A549 (cell line): ENCODE measurements at regions of chr14 and their contacts with region 1.

Region 1: DNA sequence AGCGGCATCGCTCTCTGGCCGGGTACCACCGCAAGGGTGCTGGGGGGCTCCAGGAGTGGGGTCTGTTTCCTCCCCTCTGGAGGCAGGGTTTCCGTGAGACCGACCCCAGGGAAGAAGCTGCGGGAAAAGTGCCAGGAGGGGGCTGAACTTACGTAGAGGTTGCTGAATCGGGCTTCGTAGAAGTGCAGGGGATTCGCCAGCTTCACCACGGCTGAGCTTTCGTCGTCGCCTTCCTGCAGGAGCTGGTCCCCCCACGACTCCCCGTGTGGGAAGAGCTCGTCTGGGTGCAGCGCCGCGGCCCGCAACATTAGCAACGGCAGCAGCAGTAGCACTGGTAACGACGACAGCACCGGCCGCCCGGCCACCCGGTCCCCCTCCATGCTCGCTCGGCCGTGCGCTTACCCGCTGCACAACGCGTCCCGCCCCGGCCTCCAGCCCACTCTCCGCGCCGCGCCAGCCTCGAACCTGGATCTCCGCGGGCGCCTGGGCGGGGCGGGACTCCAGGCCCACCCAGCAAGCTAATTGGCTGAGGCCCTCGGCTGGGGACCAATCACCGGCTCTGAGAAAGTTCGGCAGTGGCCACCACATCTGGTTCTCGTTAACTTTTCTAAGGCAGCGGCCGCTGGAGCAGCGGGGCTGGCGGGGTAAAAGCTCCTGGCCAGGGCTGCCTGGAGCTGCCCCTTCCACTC is at the start of gene NID2:
- DNase-seq: peak; percentile 77 to 79
- ATAC-seq: peak; percentile 89 to 96
- H3K4me3 ChIP-seq: peak within 1 kb of the TSS; percentile 64
- H3K27ac ChIP-seq: peak within 1 kb of the TSS; percentile 60 to 82
- H3K4me1 ChIP-seq: 0 out of 3 replicates have a peak, but pooled peaks cover 5% of the 10 kb centered on the region
- CTCF ChIP-seq: no peak
- EP300 ChIP-seq: no peak
- POLR2A ChIP-seq: no peak
- RAD21 ChIP-seq: no peak
- polyA plus RNA-seq, gene NID2: 7.3 and 10.3 TPM in 2 replicates

Region 2: GRCh38 chr14:52043690-52044089 is 25.1 kb before region 1 on chr14:
- CTCF ChIA-PET with region 1: interaction called, 39 read pairs
- POLR2A ChIA-PET with region 1: no interaction called
- DNase-seq: peak; percentile 60 to 73
- ATAC-seq: peak; percentile 86 to 98
- H3K4me3 ChIP-seq: no peak overlapping the region
- H3K27ac ChIP-seq: no peak overlapping the region
- H3K4me1 ChIP-seq: peaks cover 19% of the 10 kb centered on the region
- CTCF ChIP-seq: peak; percentile 55
- EP300 ChIP-seq: no peak
- POLR2A ChIP-seq: no peak
- RAD21 ChIP-seq: peak; percentile 64

Region 3: GRCh38 chr14:52080817-52081755 is 12.3 kb after region 1 on chr14:
- CTCF ChIA-PET with region 1: interaction called, 23 read pairs
- POLR2A ChIA-PET with region 1: interaction called, 5 read pairs
- DNase-seq: peak; percentile 14 to 39
- ATAC-seq: peak; percentile 83 to 85; a peak in 5 of 6 replicates
- H3K4me3 ChIP-seq: no peak overlapping the region
- H3K27ac ChIP-seq: peak overlapping the region; percentile 50 to 53
- H3K4me1 ChIP-seq: peaks cover 40% of the 10 kb centered on the region
- CTCF ChIP-seq: no peak
- EP300 ChIP-seq: no peak
- POLR2A ChIP-seq: no peak
- RAD21 ChIP-seq: no peak

Region 4: GRCh38 chr14:52166822-52167221 is 98.1 kb after region 1 on chr14:
- CTCF ChIA-PET with region 1: no interaction called
- POLR2A ChIA-PET with region 1: no interaction called
- DNase-seq: no peak
- ATAC-seq: no peak
- H3K4me3 ChIP-seq: no peak overlapping the region
- H3K27ac ChIP-seq: no peak overlapping the region
- H3K4me1 ChIP-seq: no peaks in the 10 kb centered on the region
- CTCF ChIP-seq: no peak
- EP300 ChIP-seq: no peak
- POLR2A ChIP-seq: no peak
- RAD21 ChIP-seq: no peak

Region 5: DNA sequence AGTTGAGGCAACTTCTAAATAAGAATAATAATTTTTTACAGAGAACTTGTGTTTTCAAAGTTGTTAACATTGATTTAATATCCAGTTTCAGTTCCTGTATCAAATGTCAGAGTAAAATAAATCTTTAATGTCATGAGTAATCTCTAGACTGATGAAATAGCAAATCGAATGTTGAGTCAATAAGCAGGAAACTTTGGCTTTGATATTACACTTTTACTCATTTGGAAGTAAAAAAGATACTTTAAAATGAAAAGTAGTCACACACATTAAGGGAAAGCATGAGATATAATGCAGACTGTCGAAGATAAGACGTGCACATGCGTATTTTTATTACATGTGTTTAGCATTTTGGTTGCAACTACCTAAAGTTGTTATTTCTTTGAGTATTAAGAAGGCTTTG is 120.6 kb after region 1 on chr14:
- CTCF ChIA-PET with region 1: no interaction called
- POLR2A ChIA-PET with region 1: no interaction called
- DNase-seq: no peak
- ATAC-seq: no peak
- H3K4me3 ChIP-seq: no peak overlapping the region
- H3K27ac ChIP-seq: no peak overlapping the region
- H3K4me1 ChIP-seq: no peaks in the 10 kb centered on the region
- CTCF ChIP-seq: no peak
- EP300 ChIP-seq: no peak
- POLR2A ChIP-seq: no peak
- RAD21 ChIP-seq: no peak